G401 (cell line): ENCODE measurements at regions of chr3 and their contacts with region 1.

Region 1: DNA sequence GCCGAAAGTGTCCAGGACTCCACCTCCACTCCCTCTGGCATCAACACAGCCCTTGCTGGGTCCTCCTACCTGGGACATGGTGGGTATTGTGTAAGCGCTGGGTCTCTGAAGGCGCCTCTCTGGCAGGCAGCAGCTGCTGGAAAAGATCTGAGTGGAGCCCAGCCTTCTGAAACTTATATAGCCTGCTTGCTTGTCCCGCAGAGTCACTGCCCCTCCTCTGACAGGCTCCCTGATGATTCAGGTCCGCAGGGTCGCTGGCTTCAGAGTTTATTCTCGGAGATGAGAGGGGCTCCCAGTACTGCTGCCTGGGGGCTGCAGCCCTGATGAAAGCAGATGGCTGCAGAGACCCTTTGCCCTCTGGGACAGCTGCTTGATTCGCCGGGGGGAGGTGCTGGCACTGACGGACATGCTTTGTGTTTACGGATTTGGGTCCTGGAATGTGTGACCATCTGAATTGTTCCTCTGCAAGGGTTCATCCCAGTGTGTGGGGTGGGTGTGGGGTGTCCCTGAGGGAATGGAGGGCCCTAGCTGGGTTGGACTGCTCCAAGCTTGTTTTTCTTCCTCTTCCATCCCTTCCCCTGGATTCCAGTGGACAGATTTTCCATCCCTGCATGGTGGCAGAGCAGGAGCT is at the start of gene MUSTN1:
- DNase-seq: no peak
- total RNA-seq, gene MUSTN1: not detected in 2 replicates

Region 2: GRCh38 chr3:52278510-52279069 is 556.4 kb before region 1 on chr3 and contains the start of gene WDR82:
- in situ Hi-C with region 1: no loop called
- DNase-seq: peak; percentile 93
- total RNA-seq, gene WDR82: 89.2 and 115 TPM in 2 replicates

Region 3: GRCh38 chr3:52892625-52893311 is 57.8 kb after region 1 on chr3:
- in situ Hi-C with region 1: loop called (anchors 5 kb)
- DNase-seq: no peak